Activated T-helper 1 cell treated with anti-CD3 and anti-CD28 coated beads, Interleukin-12 subunit alpha, Interleukin-12 subunit beta, Interleukin-2, Interleukin-4 antibody, amounts not matched to agents 30 ng/mL and 10 ng/mL and 1 ng/mL, durations not matched to agents 14 hours and 24 hours and 36 hours (primary cell): ENCODE measurements at regions of chr2 and their contacts with region 1.

Region 1: GRCh38 chr2:64214281-64215115 is 70.3 kb upstream of the PELI1 start:
- DNase-seq: peak; percentile 33
- H3K4me3 Mint-ChIP-seq: peak overlapping the region; percentile 58
- H3K27ac Mint-ChIP-seq: peak overlapping the region; percentile 98
- H3K4me1 Mint-ChIP-seq: peaks cover 66% of the 10 kb centered on the region
- H3K27me3 Mint-ChIP-seq: no peaks in the 10 kb centered on the region

Region 2: DNA sequence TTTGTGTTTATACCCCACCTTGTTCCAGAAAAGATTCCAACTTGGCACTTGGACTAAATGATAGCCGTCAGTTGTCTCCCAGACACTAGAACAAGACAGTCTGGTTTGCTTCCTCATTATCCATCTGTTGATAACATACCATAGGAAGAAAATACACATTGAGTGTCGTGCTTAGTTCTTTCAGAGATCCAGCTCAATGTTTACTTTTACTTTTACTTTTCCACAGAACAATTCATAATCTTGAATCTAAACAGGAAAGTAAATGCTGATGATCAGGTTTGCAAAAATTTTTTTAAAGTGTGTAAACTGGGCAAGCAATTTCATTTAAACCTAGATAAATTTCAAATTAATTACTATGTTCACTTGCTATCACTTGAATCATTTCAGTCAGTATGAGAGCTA is 192.9 kb before region 1 on chr2:
- intact Hi-C with region 1: no loop called
- DNase-seq: no peak
- H3K4me3 Mint-ChIP-seq: no peak overlapping the region
- H3K27ac Mint-ChIP-seq: peak overlapping the region; percentile 63
- H3K4me1 Mint-ChIP-seq: peaks cover 46% of the 10 kb centered on the region
- H3K27me3 Mint-ChIP-seq: no peaks in the 10 kb centered on the region

Region 3: GRCh38 chr2:64036034-64036705 is 178.3 kb before region 1 on chr2:
- intact Hi-C with region 1: loop called (anchors 1 kb)
- DNase-seq: peak; percentile 36
- H3K4me3 Mint-ChIP-seq: peak overlapping the region; percentile 51
- H3K27ac Mint-ChIP-seq: peak overlapping the region; percentile 89
- H3K4me1 Mint-ChIP-seq: peaks cover 55% of the 10 kb centered on the region
- H3K27me3 Mint-ChIP-seq: no peaks in the 10 kb centered on the region

Region 4: DNA sequence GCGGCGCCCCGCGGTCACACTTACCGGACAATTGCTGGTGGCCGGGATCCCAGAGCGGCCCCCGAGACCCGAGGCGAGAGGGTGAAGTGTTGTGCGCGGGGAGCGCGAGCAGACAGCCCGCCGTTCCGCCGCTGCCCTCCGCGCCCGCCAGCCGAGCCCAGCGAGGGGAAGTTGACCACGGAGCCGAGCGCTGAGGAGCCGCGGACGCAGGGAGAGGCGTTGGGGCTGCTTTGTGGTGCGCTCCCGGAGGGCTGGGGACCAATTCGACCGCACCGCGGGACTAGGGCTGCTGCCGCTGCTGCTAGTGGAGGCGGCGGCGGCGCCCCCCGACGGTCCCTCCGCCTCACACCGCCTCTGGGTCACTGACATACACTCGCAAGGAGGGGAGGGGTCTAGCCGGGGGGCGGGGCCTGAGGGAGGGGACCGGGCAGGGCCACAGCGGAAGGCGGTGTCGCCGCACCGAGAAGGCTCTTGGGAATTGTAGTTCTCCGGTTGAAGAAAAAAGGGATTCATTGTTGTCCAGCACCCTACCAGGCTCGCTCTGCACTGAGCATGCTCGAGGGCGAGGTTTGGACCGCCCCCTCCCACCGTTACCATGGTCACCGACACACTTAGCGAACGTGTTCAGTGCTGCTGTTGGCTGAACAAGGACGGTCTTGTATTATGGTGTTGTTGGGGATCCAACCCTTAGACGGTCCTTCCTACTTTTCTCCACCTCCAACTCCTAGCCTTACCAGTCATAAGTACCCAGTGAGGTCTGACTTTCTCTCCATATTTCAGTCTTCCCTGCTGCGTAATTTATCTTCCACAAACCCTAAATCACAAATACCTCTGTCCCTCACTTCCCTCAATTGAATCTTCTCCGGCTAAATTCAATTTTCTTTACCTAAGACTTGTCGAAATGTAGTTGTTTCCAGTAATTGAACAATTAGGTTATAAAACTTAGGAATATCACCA is 70.2 kb before region 1 on chr2 and contains the start of gene PELI1:
- intact Hi-C with region 1: loop called (anchors 1 kb)
- DNase-seq: peak; percentile 90
- H3K4me3 Mint-ChIP-seq: peak within 1 kb of the TSS; percentile 98
- H3K27ac Mint-ChIP-seq: peak within 1 kb of the TSS; percentile 97
- H3K4me1 Mint-ChIP-seq: peaks cover 28% of the 10 kb centered on the region
- H3K27me3 Mint-ChIP-seq: peaks cover 3% of the 10 kb centered on the region
- total RNA-seq, gene PELI1: 47.1 and 50.4 TPM in 2 replicates

Region 5: DNA sequence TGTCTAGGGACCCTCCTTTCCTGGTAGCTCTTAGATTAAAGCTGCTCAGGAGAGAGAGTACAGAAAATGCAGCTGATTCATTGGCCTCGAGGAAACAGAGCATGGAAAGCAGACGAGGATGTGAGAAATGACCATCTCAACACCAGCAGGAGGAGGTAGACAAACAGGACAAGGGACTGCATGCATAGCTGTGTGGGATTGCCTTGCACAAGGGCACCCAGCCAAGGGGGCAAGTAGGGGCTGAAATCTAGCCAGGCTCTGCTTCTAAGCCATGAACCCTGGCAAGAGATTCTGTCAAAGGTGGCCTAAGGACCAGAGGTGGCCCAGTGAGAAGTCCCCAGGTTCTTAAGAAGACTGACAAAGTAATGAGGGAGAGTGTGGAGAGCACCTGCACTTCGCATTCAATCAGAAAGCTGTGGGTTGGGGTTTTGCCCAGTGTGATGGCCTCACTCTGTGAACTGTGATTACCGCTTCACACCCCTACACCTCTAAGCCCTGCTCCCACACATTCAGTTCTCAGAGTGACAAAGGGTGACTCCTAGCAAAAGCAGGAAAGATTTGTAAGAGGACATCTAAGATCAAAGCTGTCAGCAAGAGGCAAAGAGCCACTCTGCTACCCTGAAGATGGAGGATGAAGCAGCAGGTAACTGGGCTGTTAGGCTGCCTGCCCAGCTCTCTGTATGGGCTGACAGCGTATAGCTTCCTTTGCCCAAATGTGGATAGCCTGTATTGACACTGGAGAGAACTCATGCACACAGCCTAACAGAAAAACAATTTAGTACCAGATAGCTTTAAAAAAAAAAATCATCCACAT is 81.0 kb after region 1 on chr2:
- intact Hi-C with region 1: loop called (anchors 1 kb)
- DNase-seq: peak; percentile 23
- H3K4me3 Mint-ChIP-seq: no peak overlapping the region
- H3K27ac Mint-ChIP-seq: peak overlapping the region; percentile 59
- H3K4me1 Mint-ChIP-seq: peaks cover 34% of the 10 kb centered on the region
- H3K27me3 Mint-ChIP-seq: peaks cover 12% of the 10 kb centered on the region

Region 6: GRCh38 chr2:64698668-64699444 is 484.4 kb after region 1 on chr2:
- intact Hi-C with region 1: loop called (anchors 2 kb)
- DNase-seq: no peak
- H3K4me3 Mint-ChIP-seq: peak overlapping the region; percentile 53
- H3K27ac Mint-ChIP-seq: peak overlapping the region; percentile 90
- H3K4me1 Mint-ChIP-seq: peaks cover 60% of the 10 kb centered on the region
- H3K27me3 Mint-ChIP-seq: no peaks in the 10 kb centered on the region

Region 7: GRCh38 chr2:65300761-65301711 is 1086.5 kb after region 1 on chr2:
- intact Hi-C with region 1: loop called (anchors 5 kb)
- DNase-seq: peak; percentile 59
- H3K4me3 Mint-ChIP-seq: peak overlapping the region; percentile 58
- H3K27ac Mint-ChIP-seq: peak overlapping the region; percentile 94
- H3K4me1 Mint-ChIP-seq: peaks cover 53% of the 10 kb centered on the region
- H3K27me3 Mint-ChIP-seq: peaks cover 37% of the 10 kb centered on the region